ENCODE measurements at regions of chr10 and their contacts with region 1.

Region 1: DNA sequence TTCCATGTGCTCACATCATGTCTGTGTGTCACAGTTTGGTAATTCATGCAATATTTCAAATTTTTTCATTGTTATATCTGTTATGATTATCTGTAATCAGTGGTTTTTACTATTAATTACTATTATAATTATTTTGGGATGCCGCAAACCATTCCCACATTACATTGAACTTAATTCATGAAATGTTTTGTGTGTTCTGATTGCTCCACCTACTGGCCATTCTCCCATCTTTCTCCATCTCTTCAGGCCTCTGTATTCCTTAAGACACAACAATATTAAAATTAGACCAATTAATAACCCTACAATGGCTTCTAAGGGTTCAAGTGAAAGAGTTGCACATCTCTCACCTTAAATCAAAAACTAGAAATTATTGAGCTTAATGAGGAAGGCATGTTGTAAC is 398.5 kb downstream of the PCDH15 start:
- DNase-seq: no peak

Region 2: GRCh38 chr10:53598914-53599313 is 803.7 kb before region 1 on chr10:
- intact Hi-C with region 1: loop called (anchors 5 kb)
- DNase-seq: no peak

Region 3: DNA sequence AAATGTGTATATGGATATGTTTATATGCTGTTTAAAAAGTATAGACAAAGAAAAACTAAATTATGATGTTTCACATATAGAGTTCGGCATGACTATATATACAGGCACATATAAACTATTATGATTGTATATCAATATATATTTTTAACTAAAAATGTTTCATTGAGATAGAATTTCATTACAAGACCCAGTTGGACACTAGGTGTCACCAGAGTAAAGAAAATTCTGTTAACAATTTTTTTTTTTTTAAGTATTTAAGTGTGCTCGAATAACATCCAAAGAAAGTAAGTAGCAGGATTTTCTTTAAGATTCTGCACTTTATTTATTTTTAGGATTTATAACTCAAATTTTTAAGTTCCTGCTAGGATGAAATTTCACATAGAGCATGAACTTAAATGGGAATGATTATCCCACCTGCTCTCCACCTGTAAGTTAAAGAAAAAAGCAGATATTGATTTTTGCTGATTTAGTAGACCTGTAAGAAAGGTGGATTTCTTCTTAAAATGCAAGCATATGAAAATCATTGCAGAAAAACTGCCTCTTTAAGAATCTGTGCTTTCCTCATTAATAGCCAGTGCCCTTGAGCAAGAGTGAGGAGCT is 563.0 kb before region 1 on chr10:
- intact Hi-C with region 1: loop called (anchors 5 kb)
- DNase-seq: no peak

Region 4: GRCh38 chr10:53997953-53998352 is 404.6 kb before region 1 on chr10:
- intact Hi-C with region 1: loop called (anchors 5 kb)
- DNase-seq: no peak

Region 5: GRCh38 chr10:54454271-54454670 is 51.7 kb after region 1 on chr10:
- intact Hi-C with region 1: no loop called
- DNase-seq: no peak

Measured in posterior cingulate gyrus (tissue), 11 donors.